CD8-positive, alpha-beta T cell (primary cell): ENCODE measurements at regions of chr16 and their contacts with region 1.

Region 1: GRCh38 chr16:90077226-90077756 is at the start of gene PRDM7:
- DNase-seq: peak; percentile 85 to 97 (median 95)
- ATAC-seq: peak; percentile 92
- H3K4me3 ChIP-seq: peak within 1 kb of the TSS; percentile 49 to 71
- H3K4me3 Mint-ChIP-seq: peak within 1 kb of the TSS; percentile 90
- H3K27ac ChIP-seq: peak within 1 kb of the TSS in 1 of 2 experiments; percentile 45
- H3K27ac Mint-ChIP-seq: peak within 1 kb of the TSS; percentile 81
- H3K4me1 ChIP-seq: peaks cover 10% of the 10 kb centered on the region
- H3K4me1 Mint-ChIP-seq: peaks cover 17% of the 10 kb centered on the region
- H3K27me3 ChIP-seq: peaks cover 0 to 3% of the 10 kb centered on the region in 2 experiments
- H3K27me3 Mint-ChIP-seq: peaks cover 2% of the 10 kb centered on the region
- CTCF ChIP-seq: no peak
- total RNA-seq, gene PRDM7: not detected

Region 2: GRCh38 chr16:89873972-89874689 is 203.2 kb before region 1 on chr16:
- CTCF ChIA-PET with region 1: no interaction called
- POLR2A ChIA-PET with region 1: no interaction called
- intact Hi-C with region 1: loop called in 1 of 2 experiments (anchors 2 kb)
- DNase-seq: peak; percentile 86 to 99 (median 96)
- ATAC-seq: peak; percentile 77
- H3K4me3 ChIP-seq: peak overlapping the region; percentile 98
- H3K4me3 Mint-ChIP-seq: peak overlapping the region; percentile 90
- H3K27ac ChIP-seq: peak overlapping the region; percentile 100
- H3K27ac Mint-ChIP-seq: peak overlapping the region; percentile 99
- H3K4me1 ChIP-seq: peaks cover 23% of the 10 kb centered on the region
- H3K4me1 Mint-ChIP-seq: peaks cover 19% of the 10 kb centered on the region
- H3K27me3 ChIP-seq: no peaks in the 10 kb centered on the region
- H3K27me3 Mint-ChIP-seq: no peaks in the 10 kb centered on the region
- CTCF ChIP-seq: no peak

Region 3: GRCh38 chr16:89958068-89958467 is 119.2 kb before region 1 on chr16:
- CTCF ChIA-PET with region 1: no interaction called
- POLR2A ChIA-PET with region 1: no interaction called
- intact Hi-C with region 1: no loop called
- DNase-seq: peak in 1 of 9 experiments; percentile 18
- ATAC-seq: peak; percentile 42
- H3K4me3 ChIP-seq: no peak overlapping the region
- H3K4me3 Mint-ChIP-seq: no peak overlapping the region
- H3K27ac ChIP-seq: no peak overlapping the region
- H3K27ac Mint-ChIP-seq: no peak overlapping the region
- H3K4me1 ChIP-seq: no peaks in the 10 kb centered on the region
- H3K4me1 Mint-ChIP-seq: no peaks in the 10 kb centered on the region
- H3K27me3 ChIP-seq: no peaks in the 10 kb centered on the region
- H3K27me3 Mint-ChIP-seq: no peaks in the 10 kb centered on the region
- CTCF ChIP-seq: no peak

Region 4: GRCh38 chr16:90046971-90047713 is 30.1 kb before region 1 on chr16:
- CTCF ChIA-PET with region 1: no interaction called
- POLR2A ChIA-PET with region 1: no interaction called
- intact Hi-C with region 1: loop called in 1 of 2 experiments (anchors 1 kb)
- DNase-seq: peak in 2 of 9 experiments; percentile 18 to 39
- ATAC-seq: peak; percentile 25
- H3K4me3 ChIP-seq: peak overlapping the region; percentile 12 to 15
- H3K4me3 Mint-ChIP-seq: no peak overlapping the region
- H3K27ac ChIP-seq: no peak overlapping the region
- H3K27ac Mint-ChIP-seq: no peak overlapping the region
- H3K4me1 ChIP-seq: peaks cover 10% of the 10 kb centered on the region
- H3K4me1 Mint-ChIP-seq: peaks cover 7% of the 10 kb centered on the region
- H3K27me3 ChIP-seq: peaks cover 0 to 9% of the 10 kb centered on the region in 2 experiments
- H3K27me3 Mint-ChIP-seq: peaks cover 13% of the 10 kb centered on the region
- CTCF ChIP-seq: no peak